Ovary (tissue), 10 donors: ENCODE measurements at regions of chrX and their contacts with region 1.

Region 1: GRCh38 chrX:20906571-20906970 is 467.6 kb upstream of the CNKSR2 start:
- DNase-seq: no peak
- H3K4me3 ChIP-seq: no peak overlapping the region
- H3K27ac ChIP-seq: no peak overlapping the region
- H3K4me1 ChIP-seq: no peaks in the 10 kb centered on the region
- H3K27me3 ChIP-seq: no peaks in the 10 kb centered on the region
- CTCF ChIP-seq: no peak
- EP300 ChIP-seq: no peak
- POLR2A ChIP-seq: no peak

Region 2: GRCh38 chrX:18917831-18918230 is 1988.7 kb before region 1 on chrX:
- intact Hi-C with region 1: loop called in 1 of 4 experiments (anchors 5 kb)
- DNase-seq: no peak
- H3K4me3 ChIP-seq: no peak overlapping the region
- H3K27ac ChIP-seq: no peak overlapping the region
- H3K4me1 ChIP-seq: no peaks in the 10 kb centered on the region
- H3K27me3 ChIP-seq: no peaks in the 10 kb centered on the region
- CTCF ChIP-seq: no peak
- EP300 ChIP-seq: no peak
- POLR2A ChIP-seq: no peak

Region 3: GRCh38 chrX:20181598-20182329 is 724.8 kb before region 1 on chrX:
- intact Hi-C with region 1: no loop called
- DNase-seq: no peak
- H3K4me3 ChIP-seq: no peak overlapping the region
- H3K27ac ChIP-seq: no peak overlapping the region
- H3K4me1 ChIP-seq: no peaks in the 10 kb centered on the region
- H3K27me3 ChIP-seq: no peaks in the 10 kb centered on the region
- CTCF ChIP-seq: no peak
- EP300 ChIP-seq: no peak
- POLR2A ChIP-seq: no peak

Region 4: DNA sequence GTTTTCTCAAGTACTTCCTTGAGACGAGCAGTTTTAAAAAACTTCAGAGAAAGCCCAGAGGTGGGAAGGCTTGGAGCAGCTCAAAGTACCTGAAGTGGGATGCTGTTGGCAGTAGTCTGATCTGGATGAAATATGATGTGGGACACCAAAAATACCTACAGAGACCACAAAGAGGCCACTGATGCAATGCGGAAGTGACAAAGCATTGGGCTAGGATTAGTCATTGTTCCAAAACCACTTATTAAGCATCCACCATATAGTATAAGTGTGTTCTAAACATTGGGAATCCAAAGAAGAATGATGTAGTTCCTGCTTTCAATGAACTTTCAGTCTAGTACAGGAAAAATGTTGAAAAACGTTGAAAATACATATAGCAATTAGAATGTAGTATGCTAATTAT is 81.5 kb after region 1 on chrX:
- intact Hi-C with region 1: no loop called
- DNase-seq: no peak
- H3K4me3 ChIP-seq: no peak overlapping the region
- H3K27ac ChIP-seq: no peak overlapping the region
- H3K4me1 ChIP-seq: no peaks in the 10 kb centered on the region
- H3K27me3 ChIP-seq: no peaks in the 10 kb centered on the region
- CTCF ChIP-seq: no peak
- EP300 ChIP-seq: no peak
- POLR2A ChIP-seq: no peak